Activated T-helper 2 cell treated with anti-CD3 and anti-CD28 coated beads, Interferon-gamma antibody, Interleukin-2, Interleukin-4, amounts not matched to agents 10 μg/mL and 5 μg/mL and 100 μg/mL, durations not matched to agents 14 hours and 24 hours and 36 hours (primary cell): ENCODE measurements at regions of chr17 and their contacts with region 1.

Region 1: GRCh38 chr17:57604771-57605674 is 140.1 kb downstream of the CCDC182 start:
- DNase-seq: no peak
- H3K4me3 Mint-ChIP-seq: no peak overlapping the region
- H3K27ac Mint-ChIP-seq: peak overlapping the region; percentile 88
- H3K4me1 Mint-ChIP-seq: peaks cover 54% of the 10 kb centered on the region
- H3K27me3 Mint-ChIP-seq: no peaks in the 10 kb centered on the region

Region 2: DNA sequence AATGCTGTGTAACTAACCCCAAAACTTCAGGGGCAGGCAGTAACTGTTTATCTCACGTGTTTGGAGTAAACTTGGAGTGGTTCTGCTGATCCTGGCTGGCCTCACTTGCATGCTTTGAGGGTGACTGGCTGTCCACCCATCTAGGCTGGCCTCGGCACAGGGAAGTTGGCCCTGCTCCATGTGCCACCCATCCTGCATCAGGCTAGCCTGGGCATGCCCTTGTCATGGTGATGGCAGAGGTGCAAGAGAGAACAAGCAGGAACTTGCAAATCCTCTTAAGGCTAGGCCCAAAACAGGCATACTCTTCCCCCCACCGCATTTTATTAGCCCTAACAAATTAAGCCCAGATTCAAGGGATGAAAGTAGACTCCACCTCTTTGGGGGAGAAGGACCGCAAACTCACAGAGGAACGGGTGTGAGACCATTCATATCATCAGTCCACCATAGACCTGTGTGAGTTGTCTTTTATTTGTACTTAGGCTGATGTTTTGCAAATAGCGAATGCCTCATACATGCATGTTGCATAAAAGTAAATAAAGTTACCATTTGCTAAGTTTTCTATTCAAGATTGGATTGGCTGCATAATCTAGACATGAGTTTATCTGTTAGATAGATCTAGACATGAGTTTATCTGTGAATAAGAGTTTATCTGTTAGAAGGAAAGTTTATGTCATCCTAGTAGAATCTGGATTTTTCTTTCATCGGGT is 80.9 kb before region 1 on chr17:
- intact Hi-C with region 1: no loop called
- DNase-seq: no peak
- H3K4me3 Mint-ChIP-seq: no peak overlapping the region
- H3K27ac Mint-ChIP-seq: peak overlapping the region; percentile 77
- H3K4me1 Mint-ChIP-seq: peaks cover 18% of the 10 kb centered on the region
- H3K27me3 Mint-ChIP-seq: no peaks in the 10 kb centered on the region

Region 3: DNA sequence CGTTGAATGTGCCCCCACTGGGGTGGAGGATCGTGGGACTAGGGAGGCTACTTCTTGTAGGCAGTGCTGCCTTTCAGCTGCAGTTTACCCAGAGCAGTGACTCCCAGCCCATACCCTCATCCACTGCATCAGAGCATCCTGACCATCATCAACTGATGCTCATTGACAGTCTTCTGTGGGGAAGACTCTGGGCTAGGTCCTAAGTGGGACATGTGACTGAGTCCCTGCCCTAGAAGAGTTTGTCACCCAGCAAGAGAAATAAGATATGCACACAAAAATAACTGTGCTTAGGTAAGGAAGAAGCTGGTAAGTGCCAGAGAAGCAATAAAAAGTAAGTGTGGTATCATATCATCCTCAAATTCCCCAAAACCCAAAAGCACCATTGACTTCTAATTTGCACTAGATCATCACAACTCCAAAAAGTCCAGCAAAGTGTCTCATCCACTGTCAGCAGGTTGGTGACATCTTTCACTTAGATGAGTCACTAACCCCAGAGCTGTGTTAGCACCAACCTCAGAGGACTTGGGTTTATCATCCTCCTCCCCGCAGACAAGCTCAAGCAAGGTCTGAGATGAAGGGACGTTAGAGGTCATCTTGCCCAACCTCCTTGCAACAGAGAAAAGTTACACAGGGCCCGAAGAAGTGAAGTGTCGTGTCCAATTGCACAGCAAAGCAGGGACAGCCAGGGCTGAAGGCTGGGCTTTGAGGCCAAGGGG is 41.1 kb after region 1 on chr17:
- intact Hi-C with region 1: loop called (anchors 2 kb)
- DNase-seq: no peak
- H3K4me3 Mint-ChIP-seq: no peak overlapping the region
- H3K27ac Mint-ChIP-seq: peak overlapping the region; percentile 77
- H3K4me1 Mint-ChIP-seq: peaks cover 9% of the 10 kb centered on the region
- H3K27me3 Mint-ChIP-seq: no peaks in the 10 kb centered on the region

Region 4: DNA sequence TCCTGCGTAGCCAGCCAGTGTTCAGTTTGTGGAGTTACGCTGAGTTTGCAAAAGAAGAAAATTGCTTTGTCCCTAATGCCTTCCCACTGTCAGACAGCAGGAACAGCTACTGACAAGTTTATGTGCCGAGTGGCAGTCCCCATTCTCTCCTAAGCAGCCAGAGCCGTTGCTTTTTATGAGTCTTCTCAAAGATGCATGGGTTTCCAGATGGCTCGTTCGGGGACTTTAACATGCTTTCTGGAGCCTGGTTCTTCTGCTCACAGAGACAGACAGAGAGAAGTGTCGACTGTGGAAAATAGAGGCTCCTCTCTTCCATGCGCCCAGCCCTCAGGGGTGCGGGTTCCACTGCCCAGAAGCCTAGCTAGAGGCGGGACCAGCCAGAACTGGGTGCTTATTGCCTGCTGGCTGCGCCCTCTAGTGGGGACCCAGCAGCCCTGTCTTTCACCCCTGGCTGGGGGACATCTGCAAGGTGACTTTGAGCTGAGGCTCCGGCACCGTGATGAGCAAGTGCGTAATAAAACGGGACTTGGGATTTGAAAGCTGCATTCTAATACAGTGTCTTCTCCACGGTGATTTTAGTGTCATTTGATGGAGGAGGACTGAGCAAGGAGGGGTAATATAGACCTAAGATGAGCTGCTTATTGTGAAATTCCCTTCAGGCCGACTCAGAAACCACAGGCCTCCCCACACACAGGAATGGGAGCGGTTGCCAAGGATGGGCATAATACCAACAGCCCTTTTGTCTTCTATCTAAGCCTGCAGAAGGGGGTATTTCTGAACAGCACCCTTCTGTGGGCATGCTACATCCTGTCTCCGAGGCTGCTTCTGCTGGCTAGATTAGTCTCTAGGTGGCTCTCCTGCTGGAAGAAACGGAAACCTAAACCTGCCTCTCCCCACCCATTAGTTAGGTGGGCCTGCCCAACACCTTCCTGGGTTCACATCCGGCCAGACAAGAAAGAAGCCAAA is 66.9 kb after region 1 on chr17:
- intact Hi-C with region 1: loop called (anchors 5 kb)
- DNase-seq: peak; percentile 53
- H3K4me3 Mint-ChIP-seq: no peak overlapping the region
- H3K27ac Mint-ChIP-seq: peak overlapping the region; percentile 45
- H3K4me1 Mint-ChIP-seq: peaks cover 5% of the 10 kb centered on the region
- H3K27me3 Mint-ChIP-seq: no peaks in the 10 kb centered on the region

Region 5: DNA sequence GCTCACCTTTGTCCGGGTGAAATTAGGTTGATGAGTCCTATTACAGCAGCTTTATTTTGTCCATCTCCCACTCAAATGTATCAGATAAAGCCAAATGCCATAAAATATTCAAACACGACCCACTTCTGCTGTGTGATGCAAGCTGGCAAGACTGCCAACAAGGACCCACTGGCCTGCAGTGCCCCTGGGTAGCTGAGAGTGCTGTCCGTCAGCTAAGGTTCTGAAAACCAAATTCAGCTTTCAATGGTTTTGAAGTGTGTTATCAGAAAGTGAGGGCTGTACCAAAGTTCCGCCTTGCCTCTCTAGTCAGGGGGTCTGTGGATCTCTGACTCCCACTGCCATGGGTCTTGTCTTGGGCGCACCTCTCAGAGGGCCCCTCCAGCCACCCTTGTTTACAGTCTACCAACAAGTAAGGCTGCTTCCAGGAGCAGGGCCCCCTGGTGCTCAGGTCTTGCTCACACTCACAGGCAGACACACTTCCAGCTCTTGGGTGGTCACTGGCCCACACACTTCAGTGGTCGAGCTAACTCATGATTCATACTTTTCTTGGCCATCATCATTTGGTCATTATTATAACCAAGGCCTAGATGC is 150.6 kb after region 1 on chr17:
- intact Hi-C with region 1: no loop called
- DNase-seq: no peak
- H3K4me3 Mint-ChIP-seq: no peak overlapping the region
- H3K27ac Mint-ChIP-seq: no peak overlapping the region
- H3K4me1 Mint-ChIP-seq: no peaks in the 10 kb centered on the region
- H3K27me3 Mint-ChIP-seq: no peaks in the 10 kb centered on the region